B cell (primary cell): ENCODE measurements at regions of chr9 and their contacts with region 1.

Region 1: GRCh38 chr9:127396808-127397497 is at the start of gene SLC2A8:
- DNase-seq: peak; percentile 100
- ATAC-seq: peak; percentile 91
- H3K4me3 ChIP-seq: peak within 1 kb of the TSS; percentile 26 to 77 (median 57)
- H3K4me3 Mint-ChIP-seq: peak within 1 kb of the TSS; percentile 86
- H3K27ac ChIP-seq: peak within 1 kb of the TSS in 1 of 2 donors; percentile 74
- H3K27ac Mint-ChIP-seq: peak within 1 kb of the TSS; percentile 79
- H3K4me1 ChIP-seq: peaks cover 4 to 16% of the 10 kb centered on the region in 2 donors
- H3K4me1 Mint-ChIP-seq: peaks cover 14% of the 10 kb centered on the region
- H3K27me3 ChIP-seq: peaks cover 0 to 7% (median 2%) of the 10 kb centered on the region in 4 experiments
- H3K27me3 Mint-ChIP-seq: no peaks in the 10 kb centered on the region
- CTCF ChIP-seq: peak; percentile 34
- total RNA-seq, gene SLC2A8: 14.2 and 18.7 TPM in 2 replicates

Region 2: DNA sequence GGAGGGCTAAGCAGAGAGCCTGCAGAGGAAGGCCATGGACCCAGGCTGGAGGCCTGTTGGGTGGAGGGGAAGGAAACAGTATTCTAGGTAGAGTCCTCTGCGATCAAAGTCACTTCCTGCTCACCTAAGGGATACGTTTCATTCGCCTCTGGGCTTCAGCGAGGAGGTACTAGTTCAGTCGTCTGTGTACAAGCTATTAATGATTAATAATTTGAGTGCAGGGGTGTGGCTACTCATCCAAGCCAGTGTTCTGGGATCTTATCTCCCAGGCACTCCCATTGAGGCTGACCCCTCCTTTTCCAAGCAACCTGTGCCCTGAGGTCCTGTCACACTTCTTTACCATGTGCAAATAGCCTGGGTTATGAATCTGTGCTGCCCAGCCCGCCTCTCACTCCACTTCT is 457.1 kb before region 1 on chr9:
- CTCF ChIA-PET with region 1: no interaction called
- POLR2A ChIA-PET with region 1: no interaction called
- intact Hi-C with region 1: loop called (anchors 2 kb)
- DNase-seq: no peak
- ATAC-seq: no peak
- H3K4me3 ChIP-seq: no peak overlapping the region
- H3K4me3 Mint-ChIP-seq: no peak overlapping the region
- H3K27ac ChIP-seq: no peak overlapping the region
- H3K27ac Mint-ChIP-seq: no peak overlapping the region
- H3K4me1 ChIP-seq: no peaks in the 10 kb centered on the region
- H3K4me1 Mint-ChIP-seq: peaks cover 5% of the 10 kb centered on the region
- H3K27me3 ChIP-seq: no peaks in the 10 kb centered on the region
- H3K27me3 Mint-ChIP-seq: no peaks in the 10 kb centered on the region
- CTCF ChIP-seq: no peak

Region 3: DNA sequence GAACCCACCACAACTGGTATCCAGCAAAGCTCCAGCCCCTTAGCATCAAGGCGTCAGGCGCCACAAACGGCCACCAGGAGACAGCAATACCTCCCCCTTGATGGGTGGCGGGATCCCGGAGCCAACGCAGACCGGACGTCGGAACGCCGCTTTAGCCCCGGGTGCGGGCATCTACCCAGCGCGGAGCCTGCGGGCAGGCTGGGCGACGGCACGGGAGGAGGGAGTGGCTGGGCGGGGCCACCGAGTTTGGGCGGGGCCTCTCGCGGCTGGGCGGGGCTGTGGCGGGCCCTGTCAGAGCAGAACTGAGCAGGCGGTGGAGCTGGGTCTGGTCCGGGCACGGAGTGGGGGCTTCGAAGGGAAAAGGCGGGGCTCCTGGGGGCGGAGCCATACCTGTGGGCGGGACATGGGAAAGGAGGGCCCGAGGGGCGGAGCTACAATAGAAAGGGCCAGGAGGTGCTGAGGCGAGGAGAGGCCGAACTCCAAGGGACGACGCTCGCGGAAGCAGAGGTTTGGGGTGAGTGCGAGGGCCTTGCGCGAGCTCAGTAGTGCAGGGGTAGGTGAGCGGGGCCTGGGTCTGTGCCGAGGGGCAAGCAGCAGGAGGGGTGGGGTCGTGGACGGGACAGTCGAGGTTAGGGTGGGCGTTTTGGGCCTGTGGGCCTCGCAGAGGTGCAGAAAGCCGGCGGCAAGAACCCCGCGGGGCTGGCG is 172.6 kb before region 1 on chr9:
- CTCF ChIA-PET with region 1: interaction called, 6 read pairs
- POLR2A ChIA-PET with region 1: interaction called, 19 read pairs
- intact Hi-C with region 1: no loop called
- DNase-seq: peak; percentile 94
- ATAC-seq: peak; percentile 73
- H3K4me3 ChIP-seq: peak overlapping the region in 4 of 5 experiments; percentile 39 to 75 (median 52)
- H3K4me3 Mint-ChIP-seq: peak overlapping the region; percentile 93
- H3K27ac ChIP-seq: peak overlapping the region in 1 of 2 donors; percentile 39
- H3K27ac Mint-ChIP-seq: peak overlapping the region; percentile 95
- H3K4me1 ChIP-seq: peaks cover 21 to 33% of the 10 kb centered on the region in 2 donors
- H3K4me1 Mint-ChIP-seq: peaks cover 43% of the 10 kb centered on the region
- H3K27me3 ChIP-seq: peaks cover 0 to 9% (median 3%) of the 10 kb centered on the region in 4 experiments
- H3K27me3 Mint-ChIP-seq: peaks cover 4% of the 10 kb centered on the region
- CTCF ChIP-seq: no peak

Region 4: DNA sequence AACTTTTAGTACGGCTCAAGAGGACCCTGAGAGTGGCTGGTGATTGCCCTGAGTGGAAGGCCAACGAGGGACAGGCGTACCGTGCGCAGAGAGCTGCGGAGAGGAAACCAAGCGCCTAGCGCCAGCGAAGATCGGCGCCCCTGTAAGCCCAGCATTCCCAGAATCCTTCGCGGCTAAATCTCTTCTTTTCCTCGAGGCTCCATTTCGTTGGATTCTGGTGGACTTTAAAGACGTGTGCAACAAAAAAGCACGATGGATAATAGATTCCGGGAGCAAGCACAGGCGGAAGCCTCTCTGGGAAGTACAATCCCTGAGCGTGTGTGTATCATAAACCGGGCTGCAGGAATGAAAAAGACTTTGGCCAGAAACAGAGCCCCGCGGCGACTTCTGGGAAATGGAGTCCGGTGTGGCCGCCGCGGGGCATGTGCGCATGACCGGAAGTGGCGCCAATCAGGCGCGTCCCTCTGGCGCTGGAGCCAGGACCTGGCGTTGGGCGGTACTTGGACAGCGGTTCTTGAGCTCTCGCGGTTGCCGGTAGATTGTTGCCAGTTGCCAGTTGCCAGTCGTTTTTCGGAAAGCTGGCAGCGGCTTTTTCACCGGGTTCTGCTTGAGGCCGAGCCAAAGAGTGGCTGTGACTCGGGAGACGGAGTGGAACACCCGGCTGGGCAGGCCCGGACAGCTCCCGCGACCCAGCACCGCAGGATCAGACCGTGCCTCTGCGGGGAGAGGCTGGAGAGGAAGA is 27.2 kb after region 1 on chr9 and contains the start of gene ZNF79:
- CTCF ChIA-PET with region 1: interaction called, 7 read pairs
- POLR2A ChIA-PET with region 1: interaction called, 4 read pairs
- intact Hi-C with region 1: loop called (anchors 1 kb)
- DNase-seq: peak; percentile 93
- ATAC-seq: peak; percentile 94
- H3K4me3 ChIP-seq: peak within 1 kb of the TSS; percentile 73 to 97 (median 86)
- H3K4me3 Mint-ChIP-seq: peak within 1 kb of the TSS; percentile 99
- H3K27ac ChIP-seq: peak within 1 kb of the TSS; percentile 56 to 79
- H3K27ac Mint-ChIP-seq: peak within 1 kb of the TSS; percentile 95
- H3K4me1 ChIP-seq: peaks cover 19 to 25% of the 10 kb centered on the region in 2 donors
- H3K4me1 Mint-ChIP-seq: peaks cover 36% of the 10 kb centered on the region
- H3K27me3 ChIP-seq: no peaks in the 10 kb centered on the region
- H3K27me3 Mint-ChIP-seq: no peaks in the 10 kb centered on the region
- CTCF ChIP-seq: peak; percentile 9
- total RNA-seq, gene ZNF79: 16.1 and 17.7 TPM in 2 replicates

Region 5: GRCh38 chr9:127715394-127716337 is 318.7 kb after region 1 on chr9 and contains the starts of genes PTRH1 and TTC16:
- CTCF ChIA-PET with region 1: no interaction called
- POLR2A ChIA-PET with region 1: no interaction called
- intact Hi-C with region 1: loop called (anchors 5 kb)
- DNase-seq: peak; percentile 98
- ATAC-seq: peak; percentile 95
- H3K4me3 ChIP-seq: peak within 1 kb of the TSS; percentile 16 to 90 (median 66)
- H3K4me3 Mint-ChIP-seq: peak within 1 kb of the TSS; percentile 97
- H3K27ac ChIP-seq: peak within 1 kb of the TSS; percentile 35 to 81
- H3K27ac Mint-ChIP-seq: peak within 1 kb of the TSS; percentile 90
- H3K4me1 ChIP-seq: peaks cover 9 to 16% of the 10 kb centered on the region in 2 donors
- H3K4me1 Mint-ChIP-seq: peaks cover 26% of the 10 kb centered on the region
- H3K27me3 ChIP-seq: no peaks in the 10 kb centered on the region
- H3K27me3 Mint-ChIP-seq: no peaks in the 10 kb centered on the region
- CTCF ChIP-seq: no peak
- total RNA-seq, gene PTRH1: 6.2 and 7.6 TPM in 2 replicates
- total RNA-seq, gene TTC16: not detected in 2 replicates

Region 6: DNA sequence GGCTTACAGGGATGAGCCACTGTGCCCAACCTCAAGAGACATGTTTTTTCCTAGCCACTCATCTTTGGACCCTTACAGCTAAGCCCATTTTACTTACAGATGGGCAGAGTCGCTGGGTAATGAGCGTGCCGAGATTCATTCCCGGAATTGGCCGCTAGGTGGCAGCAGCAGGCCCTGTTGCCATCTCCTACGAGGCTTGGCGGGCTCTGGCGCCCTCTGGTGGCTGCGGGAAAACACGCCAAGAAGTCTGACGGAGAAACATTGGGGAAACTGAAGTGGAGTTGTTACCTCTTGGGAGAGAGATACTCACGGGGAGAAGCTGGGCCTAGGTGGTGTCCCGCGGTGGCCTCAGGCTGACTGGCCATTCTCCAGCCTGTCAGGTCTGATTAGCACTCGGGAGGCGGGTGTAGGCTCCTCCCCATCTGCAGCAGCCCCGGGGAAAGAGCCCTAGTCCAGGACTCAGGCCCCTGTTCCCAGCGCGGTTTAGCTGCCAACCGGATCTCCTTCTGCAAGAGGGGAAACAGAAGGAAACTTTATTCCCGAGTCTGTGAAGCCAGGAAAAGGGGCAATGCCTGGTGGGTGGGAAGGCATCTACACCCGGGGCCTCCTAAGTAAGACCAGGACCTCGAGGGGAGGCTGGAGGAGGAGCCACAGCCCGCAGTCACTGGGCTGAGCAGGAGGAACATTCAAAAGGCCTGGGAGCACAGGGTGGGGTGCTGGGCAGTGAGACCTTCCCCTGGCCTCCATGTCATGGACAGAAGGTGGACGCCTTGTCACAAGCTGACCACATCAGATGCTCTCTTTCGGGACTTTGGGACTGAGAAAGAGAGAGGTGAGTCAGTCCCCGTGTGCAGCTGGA is 720.9 kb after region 1 on chr9:
- CTCF ChIA-PET with region 1: no interaction called
- POLR2A ChIA-PET with region 1: no interaction called
- intact Hi-C with region 1: no loop called
- DNase-seq: peak; percentile 94
- ATAC-seq: peak; percentile 52
- H3K4me3 ChIP-seq: no peak overlapping the region
- H3K4me3 Mint-ChIP-seq: no peak overlapping the region
- H3K27ac ChIP-seq: no peak overlapping the region
- H3K27ac Mint-ChIP-seq: peak overlapping the region; percentile 78
- H3K4me1 ChIP-seq: peaks cover 37 to 42% of the 10 kb centered on the region in 2 donors
- H3K4me1 Mint-ChIP-seq: peaks cover 38% of the 10 kb centered on the region
- H3K27me3 ChIP-seq: no peaks in the 10 kb centered on the region
- H3K27me3 Mint-ChIP-seq: no peaks in the 10 kb centered on the region
- CTCF ChIP-seq: peak; percentile 100